Heart left ventricle (tissue), 16 donors: ENCODE measurements at regions of chr11 and their contacts with region 1.

Region 1: GRCh38 chr11:19441752-19442553 is 201.2 kb upstream of the E2F8 start:
- DNase-seq: peak in 3 of 5 donors; percentile 19 to 82 (median 26)
- ATAC-seq: peak; percentile 73 to 92 (median 84)
- H3K4me3 ChIP-seq: no peak overlapping the region
- H3K27ac ChIP-seq: peak overlapping the region in 7 of 12 donors; percentile 1 to 88 (median 38)
- H3K4me1 ChIP-seq: peaks cover 0 to 16% (median 0%) of the 10 kb centered on the region in 12 donors
- H3K27me3 ChIP-seq: no peaks in the 10 kb centered on the region
- CTCF ChIP-seq: no peak
- POLR2A ChIP-seq: no peak

Region 2: DNA sequence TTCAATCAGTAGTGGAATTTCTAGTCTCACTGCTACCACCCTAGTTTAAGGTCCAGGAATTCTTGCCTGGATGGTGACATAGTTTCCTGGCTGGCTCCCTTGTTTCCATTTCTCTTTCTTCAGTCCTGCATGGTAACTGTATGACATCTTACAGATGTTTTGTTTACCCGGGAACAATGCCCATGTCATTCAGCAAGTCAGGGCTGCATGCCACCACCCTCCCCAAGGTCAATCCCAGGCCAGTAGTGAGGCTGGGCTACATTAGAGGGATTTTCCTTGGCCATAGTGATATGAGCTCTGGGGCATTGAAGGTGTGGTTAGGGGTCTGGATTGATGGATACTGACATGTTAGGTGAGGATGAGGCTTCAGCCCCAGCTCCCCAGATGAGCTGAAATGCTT is 86.4 kb before region 1 on chr11:
- intact Hi-C with region 1: loop called in 1 of 10 experiments (anchors 1 kb)
- DNase-seq: peak in 2 of 5 donors; percentile 31 to 51
- ATAC-seq: peak; percentile 79 to 97 (median 86)
- H3K4me3 ChIP-seq: no peak overlapping the region
- H3K27ac ChIP-seq: no peak overlapping the region
- H3K4me1 ChIP-seq: peaks cover 0 to 12% (median 1%) of the 10 kb centered on the region in 12 donors
- H3K27me3 ChIP-seq: peaks cover 0 to 16% (median under 1%) of the 10 kb centered on the region in 9 donors
- CTCF ChIP-seq: no peak
- POLR2A ChIP-seq: no peak

Region 3: DNA sequence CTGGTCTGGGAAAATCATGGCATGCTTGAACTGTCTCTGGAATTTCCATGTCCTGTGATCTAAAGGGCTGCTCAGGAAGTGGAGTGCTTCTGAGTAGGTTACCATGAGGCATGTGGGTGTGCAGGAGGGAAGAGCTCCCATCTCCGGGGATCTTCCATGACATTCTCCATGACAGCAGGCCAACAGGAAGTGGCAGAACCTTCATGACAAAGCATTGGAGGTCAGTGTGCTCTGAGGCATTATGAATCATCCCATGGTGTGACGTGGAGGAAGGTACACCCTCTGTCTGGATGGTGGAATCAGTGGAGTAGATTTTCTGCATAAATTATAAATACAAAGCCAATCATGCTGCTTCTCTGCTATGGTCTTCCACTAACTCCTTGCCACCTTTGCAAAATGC is 61.6 kb before region 1 on chr11:
- intact Hi-C with region 1: loop called in 1 of 10 experiments (anchors 10 kb)
- DNase-seq: no peak
- ATAC-seq: peak in 3 of 4 donors; percentile 48 to 80 (median 65)
- H3K4me3 ChIP-seq: no peak overlapping the region
- H3K27ac ChIP-seq: no peak overlapping the region
- H3K4me1 ChIP-seq: peaks cover 0 to 9% (median 0%) of the 10 kb centered on the region in 12 donors
- H3K27me3 ChIP-seq: no peaks in the 10 kb centered on the region
- CTCF ChIP-seq: no peak
- POLR2A ChIP-seq: no peak